B cell (primary cell): ENCODE measurements at regions of chr3 and their contacts with region 1.

Region 1: DNA sequence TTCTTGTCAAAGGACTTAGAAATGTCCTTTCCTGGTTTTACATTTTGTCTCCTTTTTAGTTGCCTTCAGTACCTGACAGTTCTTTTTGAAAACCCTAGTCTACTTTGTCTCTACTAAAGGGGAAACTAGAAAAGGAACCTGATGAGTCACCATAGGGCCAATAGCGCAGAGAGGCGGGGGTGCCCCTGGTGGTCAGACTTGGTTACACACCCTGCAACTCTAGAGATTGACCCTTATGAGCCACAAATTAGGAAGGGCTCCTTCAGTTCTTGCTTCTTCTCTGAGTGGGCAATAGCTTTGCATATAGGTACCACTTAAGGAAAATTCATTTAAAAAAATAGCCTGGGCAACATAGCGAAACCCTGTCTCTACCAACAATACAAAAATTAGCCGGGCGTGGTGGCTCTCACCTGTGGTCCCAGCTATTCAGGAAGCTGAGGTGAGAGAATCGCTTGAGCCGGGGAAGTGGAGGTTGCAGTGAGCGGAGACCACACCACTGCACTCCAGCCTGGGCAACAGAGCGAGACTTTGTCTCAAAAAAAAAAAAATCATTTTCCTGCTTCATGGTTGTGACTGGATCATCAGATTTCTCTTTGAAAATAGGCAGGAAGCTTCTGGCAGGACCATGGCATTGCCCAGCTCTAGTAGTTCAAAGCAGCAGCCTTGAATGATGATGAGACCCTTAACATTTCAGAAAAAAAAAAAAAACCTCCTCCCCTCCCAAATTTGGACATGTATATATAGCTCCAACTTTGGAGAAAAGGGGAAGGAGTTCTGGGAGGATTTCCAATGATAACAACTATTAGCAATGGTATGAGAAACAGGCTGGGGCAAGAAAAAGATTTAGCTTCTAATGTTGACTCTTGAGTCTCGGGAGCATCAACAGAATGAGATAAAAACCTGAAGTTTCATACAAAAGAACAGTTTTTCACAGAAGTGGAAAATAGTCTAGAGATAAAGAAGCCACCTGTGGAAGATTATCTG is 45.2 kb upstream of the RASA2 start:
- DNase-seq: peak; percentile 83
- ATAC-seq: peak; percentile 99
- H3K4me3 ChIP-seq: no peak overlapping the region
- H3K4me3 Mint-ChIP-seq: peak overlapping the region; percentile 45
- H3K27ac ChIP-seq: no peak overlapping the region
- H3K27ac Mint-ChIP-seq: peak overlapping the region; percentile 51
- H3K4me1 ChIP-seq: peaks cover 10 to 15% of the 10 kb centered on the region in 2 donors
- H3K4me1 Mint-ChIP-seq: peaks cover 24% of the 10 kb centered on the region
- H3K27me3 ChIP-seq: no peaks in the 10 kb centered on the region
- H3K27me3 Mint-ChIP-seq: no peaks in the 10 kb centered on the region
- CTCF ChIP-seq: peak; percentile 90

Region 2: DNA sequence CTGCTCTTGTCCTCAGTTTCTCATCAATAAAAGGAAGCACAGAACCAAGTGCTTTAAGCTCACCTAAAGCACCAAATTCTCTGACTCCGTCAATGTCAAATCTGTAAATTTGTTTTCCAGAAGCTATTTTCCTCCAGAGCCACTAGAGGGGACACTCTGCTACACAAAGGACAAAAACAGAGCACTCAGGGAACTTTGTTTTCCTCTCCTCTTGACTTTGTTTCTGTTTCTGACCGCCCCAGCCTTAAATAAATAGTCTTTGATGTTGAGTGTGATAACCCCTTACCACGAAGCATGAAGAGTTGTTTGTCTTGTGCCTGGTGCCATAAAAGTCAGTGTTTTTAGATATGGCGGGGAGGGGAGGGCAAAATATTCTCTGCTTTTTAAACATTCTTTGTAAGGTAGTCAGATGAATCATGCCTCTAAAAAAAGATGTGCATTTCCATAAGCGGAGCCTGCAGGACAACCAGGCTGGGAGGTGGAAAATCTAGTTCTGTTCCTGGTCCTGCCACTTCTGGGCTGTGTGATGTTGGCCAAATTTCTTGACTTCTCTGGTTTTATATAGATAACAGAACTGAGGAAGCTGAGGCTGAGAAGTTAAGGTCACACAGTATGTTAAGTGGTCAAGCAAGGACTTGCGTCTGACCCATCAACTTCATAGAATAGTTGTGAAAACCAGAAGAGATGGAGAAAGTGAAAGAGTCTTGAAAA is 80.6 kb before region 1 on chr3:
- CTCF ChIA-PET with region 1: interaction called, 70 read pairs
- POLR2A ChIA-PET with region 1: no interaction called
- intact Hi-C with region 1: loop called (anchors 1 kb)
- DNase-seq: peak; percentile 54
- ATAC-seq: peak; percentile 65
- H3K4me3 ChIP-seq: no peak overlapping the region
- H3K4me3 Mint-ChIP-seq: peak overlapping the region; percentile 3
- H3K27ac ChIP-seq: no peak overlapping the region
- H3K27ac Mint-ChIP-seq: no peak overlapping the region
- H3K4me1 ChIP-seq: no peaks in the 10 kb centered on the region
- H3K4me1 Mint-ChIP-seq: no peaks in the 10 kb centered on the region
- H3K27me3 ChIP-seq: no peaks in the 10 kb centered on the region
- H3K27me3 Mint-ChIP-seq: no peaks in the 10 kb centered on the region
- CTCF ChIP-seq: peak; percentile 58

Region 3: GRCh38 chr3:141386611-141387111 is 55.0 kb before region 1 on chr3:
- CTCF ChIA-PET with region 1: interaction called, 16 read pairs
- POLR2A ChIA-PET with region 1: no interaction called
- intact Hi-C with region 1: no loop called
- DNase-seq: peak; percentile 38
- ATAC-seq: peak; percentile 56
- H3K4me3 ChIP-seq: peak overlapping the region in 4 of 5 experiments; percentile 30 to 55 (median 32)
- H3K4me3 Mint-ChIP-seq: peak overlapping the region; percentile 87
- H3K27ac ChIP-seq: peak overlapping the region in 1 of 2 donors; percentile 43
- H3K27ac Mint-ChIP-seq: peak overlapping the region; percentile 91
- H3K4me1 ChIP-seq: no peaks in the 10 kb centered on the region
- H3K4me1 Mint-ChIP-seq: peaks cover 42% of the 10 kb centered on the region
- H3K27me3 ChIP-seq: peaks cover 0 to 3% (median 0%) of the 10 kb centered on the region in 4 experiments
- H3K27me3 Mint-ChIP-seq: no peaks in the 10 kb centered on the region
- CTCF ChIP-seq: no peak

Region 4: GRCh38 chr3:141412087-141412935 is 29.4 kb before region 1 on chr3:
- CTCF ChIA-PET with region 1: interaction called, 21 read pairs
- POLR2A ChIA-PET with region 1: no interaction called
- intact Hi-C with region 1: no loop called
- DNase-seq: peak; percentile 78
- ATAC-seq: peak; percentile 80
- H3K4me3 ChIP-seq: peak overlapping the region in 4 of 5 experiments; percentile 7 to 59 (median 39)
- H3K4me3 Mint-ChIP-seq: peak overlapping the region; percentile 85
- H3K27ac ChIP-seq: peak overlapping the region; percentile 64 to 86
- H3K27ac Mint-ChIP-seq: peak overlapping the region; percentile 96
- H3K4me1 ChIP-seq: peaks cover 21 to 22% of the 10 kb centered on the region in 2 donors
- H3K4me1 Mint-ChIP-seq: peaks cover 42% of the 10 kb centered on the region
- H3K27me3 ChIP-seq: no peaks in the 10 kb centered on the region
- H3K27me3 Mint-ChIP-seq: no peaks in the 10 kb centered on the region
- CTCF ChIP-seq: no peak

Region 5: DNA sequence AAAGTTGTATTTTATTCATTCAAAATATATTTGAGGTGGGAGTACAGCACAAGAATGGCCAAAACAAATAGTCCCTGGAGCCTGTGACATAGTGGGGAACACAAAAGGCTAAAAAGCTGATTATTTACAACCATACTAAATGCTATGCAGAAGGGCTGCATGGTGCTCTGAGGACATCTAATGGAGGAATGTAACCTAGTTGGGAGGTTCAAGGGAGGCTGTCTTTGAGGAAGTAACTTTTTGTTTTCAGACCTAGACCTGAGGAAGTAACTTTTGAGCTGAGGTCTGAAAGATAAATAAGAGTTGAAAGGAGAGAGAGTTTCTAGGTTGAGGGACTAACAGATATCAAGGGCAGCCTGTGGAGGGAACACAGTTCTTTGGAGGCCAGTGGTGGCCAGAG is 10.4 kb after region 1 on chr3:
- CTCF ChIA-PET with region 1: interaction called, 53 read pairs
- POLR2A ChIA-PET with region 1: no interaction called
- intact Hi-C with region 1: loop called (anchors 1 kb)
- DNase-seq: peak; percentile 79
- ATAC-seq: peak; percentile 85
- H3K4me3 ChIP-seq: no peak overlapping the region
- H3K4me3 Mint-ChIP-seq: no peak overlapping the region
- H3K27ac ChIP-seq: peak overlapping the region; percentile 55 to 77
- H3K27ac Mint-ChIP-seq: no peak overlapping the region
- H3K4me1 ChIP-seq: peaks cover 12 to 16% of the 10 kb centered on the region in 2 donors
- H3K4me1 Mint-ChIP-seq: peaks cover 7% of the 10 kb centered on the region
- H3K27me3 ChIP-seq: no peaks in the 10 kb centered on the region
- H3K27me3 Mint-ChIP-seq: no peaks in the 10 kb centered on the region
- CTCF ChIP-seq: peak; percentile 73

Region 6: GRCh38 chr3:141530133-141530768 is 88.6 kb after region 1 on chr3:
- CTCF ChIA-PET with region 1: no interaction called
- POLR2A ChIA-PET with region 1: no interaction called
- intact Hi-C with region 1: no loop called
- DNase-seq: no peak
- ATAC-seq: no peak
- H3K4me3 ChIP-seq: peak overlapping the region in 1 of 5 experiments; percentile 39
- H3K4me3 Mint-ChIP-seq: peak overlapping the region; percentile 72
- H3K27ac ChIP-seq: peak overlapping the region; percentile 14 to 80
- H3K27ac Mint-ChIP-seq: peak overlapping the region; percentile 82
- H3K4me1 ChIP-seq: peaks cover 28 to 62% of the 10 kb centered on the region in 2 donors
- H3K4me1 Mint-ChIP-seq: peaks cover 58% of the 10 kb centered on the region
- H3K27me3 ChIP-seq: no peaks in the 10 kb centered on the region
- H3K27me3 Mint-ChIP-seq: no peaks in the 10 kb centered on the region
- CTCF ChIP-seq: no peak